T-cell (primary cell): ENCODE measurements at regions of chr1 and their contacts with region 1.

Region 1: GRCh38 chr1:184340984-184341383 is 45.8 kb upstream of the C1orf21 start:
- DNase-seq: peak in 1 of 35 experiments; percentile 12
- ATAC-seq: no peak
- H3K4me3 ChIP-seq: no peak overlapping the region
- H3K4me3 Mint-ChIP-seq: no peak overlapping the region
- H3K27ac ChIP-seq: no peak overlapping the region
- H3K27ac Mint-ChIP-seq: no peak overlapping the region
- H3K4me1 ChIP-seq: no peaks in the 10 kb centered on the region
- H3K4me1 Mint-ChIP-seq: no peaks in the 10 kb centered on the region
- H3K27me3 ChIP-seq: peaks cover 0 to 2% of the 10 kb centered on the region in 2 experiments
- H3K27me3 Mint-ChIP-seq: peaks cover 3 to 10% of the 10 kb centered on the region in 2 donors

Region 2: GRCh38 chr1:185646202-185646683 is 1305.3 kb after region 1 on chr1:
- CTCF ChIA-PET with region 1: no interaction called
- POLR2A ChIA-PET with region 1: interaction called in 1 of 2 experiments, 10 read pairs
- DNase-seq: no peak
- ATAC-seq: no peak
- H3K4me3 ChIP-seq: no peak overlapping the region
- H3K4me3 Mint-ChIP-seq: peak overlapping the region in 2 of 3 donors; percentile 9 to 25
- H3K27ac ChIP-seq: no peak overlapping the region
- H3K27ac Mint-ChIP-seq: peak overlapping the region; percentile 65 to 84
- H3K4me1 ChIP-seq: peaks cover 8 to 17% of the 10 kb centered on the region in 2 experiments
- H3K4me1 Mint-ChIP-seq: peaks cover 39 to 43% (median 40%) of the 10 kb centered on the region in 3 donors
- H3K27me3 ChIP-seq: no peaks in the 10 kb centered on the region
- H3K27me3 Mint-ChIP-seq: no peaks in the 10 kb centered on the region